ENCODE measurements at regions of chr17 and their contacts with region 1.

Region 1: GRCh38 chr17:7989781-7990655 is 12.4 kb upstream of the GUCY2D start:
- DNase-seq: no peak
- H3K4me3 ChIP-seq: peak overlapping the region; percentile 65
- H3K27ac ChIP-seq: no peak overlapping the region
- H3K27me3 ChIP-seq: peaks cover 10% of the 10 kb centered on the region
- CTCF ChIP-seq: peak; percentile 96

Region 2: GRCh38 chr17:7862692-7863437 is 127.2 kb before region 1 on chr17:
- CTCF ChIA-PET with region 1: interaction called, 34 read pairs
- POLR2A ChIA-PET with region 1: no interaction called
- DNase-seq: no peak
- H3K4me3 ChIP-seq: no peak overlapping the region
- H3K27ac ChIP-seq: no peak overlapping the region
- H3K27me3 ChIP-seq: no peaks in the 10 kb centered on the region
- CTCF ChIP-seq: peak; percentile 74

Region 3: GRCh38 chr17:7922845-7923628 is 67.0 kb before region 1 on chr17:
- CTCF ChIA-PET with region 1: interaction called, 29 read pairs
- POLR2A ChIA-PET with region 1: no interaction called
- DNase-seq: peak; percentile 37
- H3K4me3 ChIP-seq: peak overlapping the region; percentile 58
- H3K27ac ChIP-seq: no peak overlapping the region
- H3K27me3 ChIP-seq: no peaks in the 10 kb centered on the region
- CTCF ChIP-seq: peak; percentile 21; the same call in 1 of the 2 replicates

Region 4: DNA sequence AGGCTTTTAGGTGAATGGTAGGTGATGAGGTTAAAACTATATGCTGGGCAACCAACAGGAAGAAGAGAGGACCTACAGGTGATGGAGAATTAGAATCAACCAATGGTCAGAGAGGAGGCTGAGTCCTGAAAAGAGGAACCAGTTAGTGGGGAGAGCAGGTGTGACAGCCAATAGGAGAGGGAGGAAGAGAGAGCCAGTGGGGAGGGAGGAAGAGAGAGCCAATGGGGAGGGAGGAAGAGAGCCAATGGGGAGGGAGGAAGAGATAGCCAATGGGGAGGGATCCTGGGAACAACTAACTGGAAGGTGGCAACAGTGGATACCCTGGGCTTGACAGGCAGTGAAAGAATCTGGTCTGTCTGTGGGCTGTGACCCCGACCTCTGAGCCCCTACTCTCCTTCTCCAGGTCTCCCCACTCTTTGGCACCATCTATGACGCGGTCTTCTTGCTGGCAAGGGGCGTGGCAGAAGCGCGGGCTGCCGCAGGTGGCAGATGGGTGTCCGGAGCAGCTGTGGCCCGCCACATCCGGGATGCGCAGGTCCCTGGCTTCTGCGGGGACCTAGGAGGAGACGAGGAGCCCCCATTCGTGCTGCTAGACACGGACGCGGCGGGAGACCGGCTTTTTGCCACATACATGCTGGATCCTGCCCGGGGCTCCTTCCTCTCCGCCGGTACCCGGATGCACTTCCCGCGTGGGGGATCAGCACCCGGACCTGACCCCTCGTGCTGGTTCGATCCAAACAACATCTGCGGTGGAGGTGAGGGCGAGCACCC is 16.1 kb after region 1 on chr17:
- CTCF ChIA-PET with region 1: interaction called, 35 read pairs
- POLR2A ChIA-PET with region 1: no interaction called
- DNase-seq: no peak
- H3K4me3 ChIP-seq: no peak overlapping the region
- H3K27ac ChIP-seq: no peak overlapping the region
- H3K27me3 ChIP-seq: peaks cover 31% of the 10 kb centered on the region
- CTCF ChIP-seq: no peak